Adrenal gland (tissue), 19 donors: ENCODE measurements at regions of chr13 and their contacts with region 1.

Region 1: DNA sequence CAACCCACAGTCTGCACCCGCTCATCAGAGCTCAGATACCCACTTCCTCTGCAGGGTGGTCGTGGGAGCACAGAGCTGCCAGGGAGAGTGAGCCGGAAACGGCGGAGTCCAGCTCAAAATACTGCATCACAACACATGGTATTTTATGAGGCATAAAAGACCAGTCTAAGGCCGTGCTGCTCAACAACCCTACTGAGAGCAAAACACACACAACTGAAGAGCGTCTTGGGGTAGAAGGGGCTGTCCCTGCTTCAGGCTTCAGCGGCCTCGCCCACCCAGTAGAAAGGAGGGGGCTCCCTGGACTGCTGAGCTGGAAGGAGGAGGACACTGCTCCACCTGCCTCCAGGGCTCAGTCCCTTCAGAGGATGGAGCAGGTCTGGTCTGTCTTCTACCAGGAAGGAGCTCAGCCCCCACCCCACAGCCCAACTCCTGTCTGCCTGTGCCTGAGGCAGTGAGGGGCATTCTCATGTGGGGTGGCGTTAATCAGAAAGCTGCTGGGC is 36.9 kb downstream of the NAXD start:
- DNase-seq: no peak
- H3K4me3 ChIP-seq: no peak overlapping the region
- H3K27ac ChIP-seq: no peak overlapping the region
- H3K4me1 ChIP-seq: peaks cover 0 to 6% of the 10 kb centered on the region in 2 donors
- H3K27me3 ChIP-seq: no peaks in the 10 kb centered on the region
- CTCF ChIP-seq: no peak
- POLR2A ChIP-seq: no peak

Region 2: GRCh38 chr13:110705826-110706569 is 53.7 kb after region 1 on chr13 and contains the start of gene CARS2:
- intact Hi-C with region 1: loop called in 1 of 2 experiments (anchors 10 kb)
- DNase-seq: peak; percentile 97 to 98 (median 98)
- H3K4me3 ChIP-seq: peak within 1 kb of the TSS in 3 of 4 donors; percentile 50 to 84 (median 57)
- H3K27ac ChIP-seq: peak within 1 kb of the TSS in 4 of 5 donors; percentile 64 to 92 (median 77)
- H3K4me1 ChIP-seq: peaks cover 4 to 27% of the 10 kb centered on the region in 2 donors
- H3K27me3 ChIP-seq: no peaks in the 10 kb centered on the region
- CTCF ChIP-seq: peak in 2 of 6 experiments; percentile 13 to 35
- POLR2A ChIP-seq: peak; percentile 69 to 90
- total RNA-seq, gene CARS2: 38.5 to 87.1 (median 57.6) TPM